ENCODE measurements at regions of chr6 and their contacts with region 1.

Region 1: GRCh38 chr6:26216356-26216885 is 129.2 kb downstream of the HFE start:
- DNase-seq: peak; percentile 93
- ATAC-seq: peak; percentile 67
- H3K4me3 Mint-ChIP-seq: no peak overlapping the region
- H3K27ac Mint-ChIP-seq: no peak overlapping the region
- H3K4me1 Mint-ChIP-seq: peaks cover 43% of the 10 kb centered on the region
- H3K27me3 Mint-ChIP-seq: no peaks in the 10 kb centered on the region

Region 2: DNA sequence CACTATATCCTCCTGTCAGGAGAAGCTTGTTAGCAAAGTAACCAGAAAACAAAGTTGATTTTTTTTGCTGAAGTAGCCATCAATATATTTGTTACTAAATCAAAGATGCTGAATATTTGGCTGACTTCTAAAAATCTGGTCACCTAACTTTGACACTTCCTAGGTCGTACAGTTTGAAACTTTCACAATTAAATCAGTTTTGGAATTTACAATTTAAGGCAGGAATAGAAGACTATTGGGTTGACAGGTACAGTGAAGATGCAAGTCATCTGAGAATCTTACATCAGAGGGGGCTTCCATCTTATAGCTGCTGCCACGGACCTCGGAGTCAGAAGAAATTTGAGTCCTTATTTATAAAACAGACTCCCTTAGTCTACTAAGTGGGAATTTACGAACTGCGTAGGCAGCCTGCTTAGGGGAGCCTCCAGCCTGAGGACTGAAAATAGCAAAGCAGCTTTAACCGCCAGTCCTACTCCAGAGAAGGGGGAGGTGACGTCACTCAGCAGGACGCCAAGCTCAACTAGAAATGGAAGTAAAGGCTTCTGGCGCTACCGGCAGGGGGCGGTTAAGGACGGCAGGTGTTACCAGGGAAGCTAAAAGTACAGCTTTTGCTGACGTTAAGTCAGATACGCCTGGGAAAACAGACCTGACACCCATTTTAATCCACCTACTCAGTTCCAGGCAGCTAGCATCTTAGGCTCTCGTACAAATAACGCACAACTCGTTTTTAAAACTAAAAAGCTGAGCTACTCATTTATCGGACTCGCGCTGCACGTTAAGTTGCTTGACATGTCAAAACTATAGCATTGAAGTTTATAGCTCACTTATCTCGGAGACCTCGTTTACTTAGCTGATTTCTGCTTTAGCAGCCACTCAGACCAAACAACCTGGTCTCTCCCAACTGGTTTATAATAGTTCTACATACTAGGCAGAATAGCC is 190.3 kb before region 1 on chr6:
- CTCF ChIA-PET with region 1: no interaction called
- POLR2A ChIA-PET with region 1: interaction called, 90 read pairs
- DNase-seq: peak; percentile 97
- ATAC-seq: peak; percentile 42
- H3K4me3 Mint-ChIP-seq: peak overlapping the region; percentile 86
- H3K27ac Mint-ChIP-seq: peak overlapping the region; percentile 99
- H3K4me1 Mint-ChIP-seq: peaks cover 86% of the 10 kb centered on the region
- H3K27me3 Mint-ChIP-seq: peaks cover 3% of the 10 kb centered on the region

Region 3: DNA sequence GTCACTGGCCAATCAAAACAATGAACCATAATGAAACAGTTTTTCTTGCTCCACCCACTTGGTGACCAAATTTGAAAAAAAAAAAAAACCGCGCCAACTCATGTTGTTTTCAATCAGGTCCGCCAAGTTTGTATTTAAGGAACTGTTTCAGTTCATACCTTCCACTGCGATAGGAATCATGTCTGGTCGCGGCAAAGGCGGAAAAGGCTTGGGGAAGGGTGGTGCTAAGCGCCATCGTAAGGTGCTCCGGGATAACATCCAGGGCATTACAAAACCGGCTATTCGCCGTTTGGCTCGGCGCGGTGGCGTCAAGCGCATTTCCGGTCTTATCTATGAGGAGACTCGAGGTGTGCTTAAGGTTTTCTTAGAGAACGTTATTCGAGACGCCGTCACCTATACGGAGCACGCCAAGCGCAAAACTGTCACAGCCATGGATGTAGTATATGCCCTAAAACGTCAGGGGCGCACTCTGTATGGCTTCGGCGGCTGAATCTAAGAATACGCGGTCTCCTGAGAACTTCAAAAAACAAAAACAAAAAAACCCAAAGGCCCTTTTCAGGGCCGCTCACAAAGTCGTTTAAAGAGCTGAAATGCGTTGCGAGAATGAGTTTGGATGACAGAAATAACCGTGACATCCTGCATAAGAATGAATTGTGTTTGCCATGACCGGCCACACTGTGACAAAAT is 112.5 kb before region 1 on chr6:
- CTCF ChIA-PET with region 1: no interaction called
- POLR2A ChIA-PET with region 1: interaction called, 15 read pairs
- DNase-seq: peak; percentile 93
- ATAC-seq: peak; percentile 89
- H3K4me3 Mint-ChIP-seq: peak overlapping the region; percentile 85
- H3K27ac Mint-ChIP-seq: peak overlapping the region; percentile 98
- H3K4me1 Mint-ChIP-seq: peaks cover 26% of the 10 kb centered on the region
- H3K27me3 Mint-ChIP-seq: peaks cover 2% of the 10 kb centered on the region

Region 4: DNA sequence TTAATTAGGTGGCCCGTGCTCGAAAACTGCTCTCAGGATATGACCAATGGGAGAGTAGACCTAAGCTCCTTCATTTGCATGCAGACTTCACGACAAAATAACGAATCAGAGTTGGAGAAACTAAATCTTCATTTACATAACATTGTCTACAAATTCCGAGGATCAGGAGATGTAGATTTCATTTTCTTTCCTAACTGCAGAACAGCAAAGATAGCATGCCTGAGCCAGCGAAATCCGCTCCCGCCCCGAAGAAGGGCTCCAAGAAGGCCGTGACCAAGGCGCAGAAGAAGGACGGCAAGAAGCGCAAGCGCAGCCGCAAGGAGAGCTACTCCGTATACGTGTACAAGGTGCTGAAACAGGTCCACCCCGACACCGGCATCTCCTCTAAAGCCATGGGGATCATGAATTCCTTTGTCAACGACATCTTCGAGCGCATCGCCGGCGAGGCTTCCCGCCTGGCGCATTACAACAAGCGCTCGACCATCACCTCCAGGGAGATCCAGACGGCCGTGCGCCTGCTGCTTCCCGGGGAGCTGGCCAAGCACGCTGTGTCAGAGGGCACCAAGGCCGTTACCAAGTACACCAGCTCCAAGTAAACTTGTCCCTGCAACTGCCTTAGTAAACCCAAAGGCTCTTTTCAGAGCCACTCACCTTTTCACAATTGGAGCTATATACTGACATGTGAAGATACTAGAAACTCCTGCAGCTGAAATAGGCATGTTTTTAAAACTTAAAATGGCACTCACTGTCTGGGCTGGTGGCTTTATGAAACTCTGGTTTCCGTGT is 32.6 kb before region 1 on chr6:
- CTCF ChIA-PET with region 1: interaction called, 10 read pairs
- POLR2A ChIA-PET with region 1: interaction called, 2,224 read pairs
- DNase-seq: peak; percentile 80
- ATAC-seq: peak; percentile 80
- H3K4me3 Mint-ChIP-seq: peak overlapping the region; percentile 83
- H3K27ac Mint-ChIP-seq: peak overlapping the region; percentile 97
- H3K4me1 Mint-ChIP-seq: peaks cover 79% of the 10 kb centered on the region
- H3K27me3 Mint-ChIP-seq: no peaks in the 10 kb centered on the region

Region 5: DNA sequence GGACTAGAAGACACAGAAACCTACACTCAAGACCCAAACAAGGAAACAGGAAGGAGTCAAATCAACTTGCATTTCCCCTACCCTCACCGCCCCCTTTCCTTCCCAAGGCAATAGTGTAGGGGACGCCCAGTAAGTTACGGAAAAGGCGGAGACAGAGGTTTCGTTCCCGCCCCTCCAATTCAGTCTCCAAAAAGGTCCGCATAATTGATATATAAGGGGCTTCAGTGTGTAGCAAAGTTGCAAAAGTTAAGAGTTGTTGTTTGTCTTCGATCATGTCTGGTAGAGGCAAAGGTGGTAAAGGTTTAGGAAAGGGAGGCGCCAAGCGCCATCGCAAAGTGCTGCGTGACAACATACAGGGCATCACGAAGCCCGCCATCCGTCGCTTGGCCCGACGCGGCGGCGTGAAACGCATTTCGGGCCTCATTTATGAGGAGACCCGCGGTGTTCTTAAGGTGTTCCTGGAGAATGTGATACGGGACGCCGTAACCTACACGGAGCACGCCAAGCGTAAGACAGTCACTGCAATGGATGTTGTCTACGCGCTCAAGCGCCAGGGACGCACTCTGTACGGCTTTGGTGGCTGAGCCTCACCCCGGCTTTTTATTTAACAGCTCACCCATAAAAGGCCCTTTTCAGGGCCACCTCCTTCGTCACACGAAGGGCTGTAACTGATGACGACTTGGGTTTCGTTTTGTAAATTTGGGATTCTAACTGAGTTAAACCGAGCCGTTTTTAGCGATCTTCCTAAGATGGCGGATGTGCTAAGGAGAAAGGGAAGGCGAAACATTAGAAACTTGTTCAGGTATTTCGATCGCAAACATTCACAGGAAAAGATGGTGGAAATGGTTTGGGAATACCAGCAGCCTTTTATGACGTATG is 24.0 kb after region 1 on chr6:
- CTCF ChIA-PET with region 1: interaction called, 14 read pairs
- POLR2A ChIA-PET with region 1: interaction called, 1,100 read pairs
- DNase-seq: peak; percentile 94
- ATAC-seq: peak; percentile 81
- H3K4me3 Mint-ChIP-seq: peak overlapping the region; percentile 74
- H3K27ac Mint-ChIP-seq: peak overlapping the region; percentile 96
- H3K4me1 Mint-ChIP-seq: peaks cover 51% of the 10 kb centered on the region
- H3K27me3 Mint-ChIP-seq: peaks cover 2% of the 10 kb centered on the region

Region 6: DNA sequence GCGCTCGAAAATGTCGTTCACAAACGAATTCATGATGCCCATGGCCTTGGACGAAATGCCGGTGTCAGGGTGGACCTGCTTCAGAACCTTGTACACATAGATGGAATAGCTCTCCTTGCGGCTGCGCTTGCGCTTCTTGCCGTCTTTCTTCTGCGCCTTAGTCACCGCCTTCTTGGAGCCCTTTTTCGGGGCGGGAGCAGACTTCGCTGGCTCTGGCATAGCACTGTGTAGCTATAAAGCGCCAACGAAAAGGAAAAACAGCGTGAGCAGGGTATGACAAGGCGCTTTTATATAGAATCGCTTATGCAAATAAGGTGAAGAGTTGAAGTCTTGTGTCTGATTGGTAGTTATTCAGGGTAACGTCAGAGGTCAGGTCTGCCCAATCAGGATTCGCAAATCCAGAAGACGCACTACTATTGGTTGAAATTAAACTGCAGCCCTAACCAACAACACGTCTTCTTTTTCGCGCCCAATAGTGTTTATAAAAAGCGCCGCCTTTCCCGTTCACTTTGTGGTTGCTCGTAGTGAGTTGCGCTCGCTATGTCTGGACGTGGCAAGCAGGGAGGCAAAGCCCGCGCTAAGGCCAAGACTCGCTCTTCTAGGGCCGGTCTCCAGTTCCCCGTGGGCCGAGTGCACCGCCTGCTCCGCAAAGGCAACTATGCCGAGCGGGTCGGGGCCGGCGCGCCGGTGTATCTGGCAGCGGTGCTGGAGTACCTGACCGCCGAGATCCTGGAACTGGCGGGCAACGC is 916.3 kb after region 1 on chr6:
- CTCF ChIA-PET with region 1: no interaction called
- POLR2A ChIA-PET with region 1: interaction called, 32 read pairs
- DNase-seq: peak; percentile 95
- ATAC-seq: peak; percentile 76
- H3K4me3 Mint-ChIP-seq: no peak overlapping the region
- H3K27ac Mint-ChIP-seq: no peak overlapping the region
- H3K4me1 Mint-ChIP-seq: peaks cover 68% of the 10 kb centered on the region
- H3K27me3 Mint-ChIP-seq: no peaks in the 10 kb centered on the region

Region 7: GRCh38 chr6:27838058-27838944 is 1621.9 kb after region 1 on chr6:
- CTCF ChIA-PET with region 1: no interaction called
- POLR2A ChIA-PET with region 1: interaction called, 17 read pairs
- DNase-seq: peak; percentile 92
- ATAC-seq: peak; percentile 78
- H3K4me3 Mint-ChIP-seq: no peak overlapping the region
- H3K27ac Mint-ChIP-seq: no peak overlapping the region
- H3K4me1 Mint-ChIP-seq: peaks cover 33% of the 10 kb centered on the region
- H3K27me3 Mint-ChIP-seq: no peaks in the 10 kb centered on the region